OCI-LY7 (cell line): ENCODE measurements at regions of chr4 and their contacts with region 1.

Region 1: GRCh38 chr4:163663454-163664225 is 169.2 kb downstream of the TMA16 start:
- DNase-seq: peak; percentile 93
- H3K4me3 ChIP-seq: peak overlapping the region; percentile 50
- H3K27ac ChIP-seq: peak overlapping the region; percentile 99
- H3K4me1 ChIP-seq: peaks cover 69% of the 10 kb centered on the region
- CTCF ChIP-seq: peak; percentile 52

Region 2: DNA sequence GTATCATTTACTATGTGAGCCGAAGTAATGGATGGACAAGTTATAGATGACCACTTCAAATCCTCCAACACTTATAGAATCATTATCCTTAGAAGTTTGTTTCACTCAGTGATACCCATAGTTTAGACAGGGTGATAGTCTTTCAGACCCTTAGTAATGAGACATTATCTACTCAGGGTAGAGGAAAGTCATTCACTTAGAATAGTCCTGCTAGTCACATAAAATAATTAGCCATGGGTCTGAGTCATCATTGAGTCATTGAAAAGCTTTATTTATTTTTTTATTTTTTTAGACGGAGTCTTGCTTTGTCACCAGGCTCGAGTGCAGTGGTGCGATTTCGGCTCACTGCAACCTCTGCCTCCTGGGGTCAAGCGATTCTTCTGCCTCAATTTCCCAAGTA is 1178.2 kb before region 1 on chr4:
- CTCF ChIA-PET with region 1: no interaction called
- POLR2A ChIA-PET with region 1: no interaction called
- intact Hi-C with region 1: no loop called
- DNase-seq: no peak
- H3K4me3 ChIP-seq: no peak overlapping the region
- H3K27ac ChIP-seq: no peak overlapping the region
- H3K4me1 ChIP-seq: no peaks in the 10 kb centered on the region
- CTCF ChIP-seq: no peak

Region 3: GRCh38 chr4:163494360-163495162 is 169.1 kb before region 1 on chr4 and contains the start of gene TMA16:
- CTCF ChIA-PET with region 1: no interaction called
- POLR2A ChIA-PET with region 1: interaction called, 21 read pairs
- intact Hi-C with region 1: loop called (anchors 1 kb)
- DNase-seq: peak; percentile 96
- H3K4me3 ChIP-seq: peak within 1 kb of the TSS; percentile 90
- H3K27ac ChIP-seq: peak within 1 kb of the TSS; percentile 87
- H3K4me1 ChIP-seq: peaks cover 30% of the 10 kb centered on the region
- CTCF ChIP-seq: no peak
- total RNA-seq, gene TMA16: 56.9 and 83.9 TPM in 2 replicates

Region 4: GRCh38 chr4:163611784-163612445 is 51.7 kb before region 1 on chr4:
- CTCF ChIA-PET with region 1: interaction called, 7 read pairs
- POLR2A ChIA-PET with region 1: interaction called, 74 read pairs
- intact Hi-C with region 1: loop called (anchors 2 kb)
- DNase-seq: no peak
- H3K4me3 ChIP-seq: peak overlapping the region; percentile 32
- H3K27ac ChIP-seq: no peak overlapping the region
- H3K4me1 ChIP-seq: peaks cover 64% of the 10 kb centered on the region
- CTCF ChIP-seq: no peak

Region 5: GRCh38 chr4:163651761-163652160 is 11.9 kb before region 1 on chr4:
- CTCF ChIA-PET with region 1: no interaction called
- POLR2A ChIA-PET with region 1: interaction called, 22 read pairs
- intact Hi-C with region 1: no loop called
- DNase-seq: no peak
- H3K4me3 ChIP-seq: no peak overlapping the region
- H3K27ac ChIP-seq: no peak overlapping the region
- H3K4me1 ChIP-seq: no peaks in the 10 kb centered on the region
- CTCF ChIP-seq: no peak

Region 6: DNA sequence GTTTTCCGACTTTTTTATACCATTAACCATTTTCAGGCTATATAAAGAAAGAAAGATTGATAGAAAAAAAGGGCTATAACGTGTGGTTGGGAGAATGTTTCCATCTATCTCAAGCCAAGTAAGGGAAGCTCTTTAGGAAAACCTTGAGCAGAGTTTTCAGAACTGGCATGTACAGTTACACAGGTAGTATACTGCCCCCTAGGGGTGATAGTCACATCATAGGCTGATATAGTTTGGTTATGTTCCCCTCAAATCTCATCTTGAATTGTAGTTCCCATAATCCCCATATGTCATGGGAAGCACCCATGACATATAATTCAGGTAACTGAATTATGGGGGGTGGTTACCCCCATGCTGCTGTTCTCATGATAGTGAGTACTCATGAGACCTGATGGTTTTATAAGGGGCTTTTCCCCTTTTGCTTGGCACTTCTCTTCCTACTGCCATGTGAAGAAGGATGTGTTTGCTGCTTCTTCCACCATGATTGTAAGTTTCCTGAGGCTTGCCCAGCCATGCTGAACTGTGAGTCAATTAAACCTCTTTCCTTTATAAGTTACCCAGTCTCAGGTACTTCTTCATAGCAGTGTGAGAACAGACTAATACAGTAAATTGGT is 17.7 kb after region 1 on chr4:
- CTCF ChIA-PET with region 1: interaction called, 3 read pairs
- POLR2A ChIA-PET with region 1: interaction called, 45 read pairs
- intact Hi-C with region 1: no loop called
- DNase-seq: peak; percentile 89
- H3K4me3 ChIP-seq: no peak overlapping the region
- H3K27ac ChIP-seq: no peak overlapping the region
- H3K4me1 ChIP-seq: peaks cover 4% of the 10 kb centered on the region
- CTCF ChIP-seq: peak; percentile 89